AG04450 (cell line): ENCODE measurements at regions of chr2 and their contacts with region 1.

Region 1: GRCh38 chr2:133844214-133844892 is 276.1 kb upstream of the NCKAP5 start:
- DNase-seq: peak; percentile 77
- H3K4me3 ChIP-seq: no peak overlapping the region
- H3K27ac ChIP-seq: peak overlapping the region; percentile 61
- H3K27me3 ChIP-seq: no peaks in the 10 kb centered on the region
- CTCF ChIP-seq: peak; percentile 89

Region 2: GRCh38 chr2:133266041-133266925 is 578.1 kb before region 1 on chr2:
- CTCF ChIA-PET with region 1: interaction called, 17 read pairs
- POLR2A ChIA-PET with region 1: interaction called, 8 read pairs
- DNase-seq: no peak
- H3K4me3 ChIP-seq: peak overlapping the region; percentile 74
- H3K27ac ChIP-seq: peak overlapping the region; percentile 33
- H3K27me3 ChIP-seq: no peaks in the 10 kb centered on the region
- CTCF ChIP-seq: peak; percentile 49

Region 3: DNA sequence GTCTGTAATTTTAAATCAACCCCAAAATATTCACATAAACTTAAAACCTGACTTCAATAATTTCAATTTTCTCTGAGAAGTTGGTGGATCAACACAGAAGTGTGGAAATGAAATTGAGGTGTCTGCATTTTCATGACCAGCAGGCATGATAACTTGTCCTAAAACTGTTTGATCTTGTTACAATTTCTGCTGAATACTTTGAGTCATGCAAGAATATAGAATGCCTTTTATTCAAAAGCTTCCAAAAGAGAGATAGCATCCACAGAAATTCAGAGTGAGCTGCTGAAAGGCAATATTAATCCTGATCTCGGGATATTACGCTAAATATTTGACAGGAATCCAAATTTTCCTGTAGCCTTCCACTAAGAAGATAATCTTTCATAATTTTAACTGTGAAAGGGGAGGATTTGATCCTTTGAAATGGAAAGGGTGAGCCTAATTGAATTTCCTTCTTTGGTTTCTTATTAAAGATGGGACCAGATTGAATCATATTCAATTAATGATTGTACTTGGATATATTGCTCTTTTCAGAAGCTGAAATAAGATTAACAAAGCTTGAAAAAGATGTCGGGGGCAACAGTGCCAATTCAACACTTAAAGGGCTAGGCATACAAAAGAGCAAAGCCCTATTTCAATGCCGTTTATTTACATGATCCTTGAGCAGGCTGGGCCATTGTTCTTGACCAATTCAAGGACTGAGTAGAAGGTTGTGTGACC is 405.3 kb before region 1 on chr2:
- CTCF ChIA-PET with region 1: no interaction called
- POLR2A ChIA-PET with region 1: no interaction called
- DNase-seq: no peak
- H3K4me3 ChIP-seq: no peak overlapping the region
- H3K27ac ChIP-seq: no peak overlapping the region
- H3K27me3 ChIP-seq: no peaks in the 10 kb centered on the region
- CTCF ChIP-seq: no peak

Region 4: GRCh38 chr2:133497270-133497893 is 347.0 kb before region 1 on chr2:
- CTCF ChIA-PET with region 1: interaction called, 10 read pairs
- POLR2A ChIA-PET with region 1: no interaction called
- DNase-seq: no peak
- H3K4me3 ChIP-seq: no peak overlapping the region
- H3K27ac ChIP-seq: no peak overlapping the region
- H3K27me3 ChIP-seq: no peaks in the 10 kb centered on the region
- CTCF ChIP-seq: no peak

Region 5: GRCh38 chr2:133561045-133561852 is 283.1 kb before region 1 on chr2:
- CTCF ChIA-PET with region 1: interaction called, 42 read pairs
- POLR2A ChIA-PET with region 1: no interaction called
- DNase-seq: peak; percentile 71
- H3K4me3 ChIP-seq: no peak overlapping the region
- H3K27ac ChIP-seq: no peak overlapping the region
- H3K27me3 ChIP-seq: no peaks in the 10 kb centered on the region
- CTCF ChIP-seq: peak; percentile 79

Region 6: GRCh38 chr2:133568172-133568571 is 276.2 kb before region 1 on chr2 and contains the start of gene NCKAP5:
- CTCF ChIA-PET with region 1: interaction called, 42 read pairs
- POLR2A ChIA-PET with region 1: no interaction called
- DNase-seq: peak; percentile 43
- H3K4me3 ChIP-seq: peak within 1 kb of the TSS; percentile 67
- H3K27ac ChIP-seq: peak within 1 kb of the TSS; percentile 87
- H3K27me3 ChIP-seq: no peaks in the 10 kb centered on the region
- CTCF ChIP-seq: peak; percentile 51
- polyA plus RNA-seq, gene NCKAP5: 14.8 and 16.6 TPM in 2 replicates

Region 7: DNA sequence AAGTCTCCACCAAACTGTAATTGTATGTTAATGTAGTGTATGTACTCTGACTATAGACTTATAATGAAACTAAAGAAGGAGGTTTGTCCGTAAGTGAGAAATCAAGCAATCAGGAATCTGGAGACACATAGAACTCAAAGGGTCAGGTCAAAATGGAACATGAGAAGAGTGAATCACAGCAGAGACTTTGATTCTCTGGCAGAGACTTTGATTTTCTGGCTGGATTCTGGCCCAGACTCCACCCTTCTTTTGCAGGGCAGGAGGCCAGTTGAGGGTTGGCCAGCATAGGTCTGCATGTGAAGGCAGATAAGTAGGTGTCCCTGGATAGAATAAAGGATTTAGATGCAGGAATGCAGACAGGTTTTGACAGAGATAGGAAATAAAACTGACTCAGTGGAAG is 265.1 kb before region 1 on chr2:
- CTCF ChIA-PET with region 1: interaction called, 13 read pairs
- POLR2A ChIA-PET with region 1: no interaction called
- DNase-seq: peak; percentile 27
- H3K4me3 ChIP-seq: no peak overlapping the region
- H3K27ac ChIP-seq: no peak overlapping the region
- H3K27me3 ChIP-seq: no peaks in the 10 kb centered on the region
- CTCF ChIP-seq: no peak